ENCODE measurements at regions of chr3 and their contacts with region 1.

Region 1: GRCh38 chr3:48439820-48440589 is at the starts of genes CCDC51 and TMA7:
- DNase-seq: peak; percentile 99
- ATAC-seq: peak; percentile 96
- H3K4me3 Mint-ChIP-seq: peak within 1 kb of the TSS; percentile 97
- H3K27ac Mint-ChIP-seq: peak within 1 kb of the TSS; percentile 96
- H3K4me1 Mint-ChIP-seq: peaks cover 34% of the 10 kb centered on the region
- H3K27me3 Mint-ChIP-seq: no peaks in the 10 kb centered on the region
- total RNA-seq, gene CCDC51: 16.3 to 16.5 TPM
- total RNA-seq, gene TMA7: 339 to 364 TPM

Region 2: GRCh38 chr3:48240711-48241491 is 199.1 kb before region 1 on chr3 and contains the start of gene ZNF589:
- CTCF ChIA-PET with region 1: interaction called, 79 read pairs
- POLR2A ChIA-PET with region 1: interaction called, 7 read pairs
- DNase-seq: peak; percentile 98
- ATAC-seq: peak; percentile 99
- H3K4me3 Mint-ChIP-seq: peak within 1 kb of the TSS; percentile 92
- H3K27ac Mint-ChIP-seq: peak within 1 kb of the TSS; percentile 96
- H3K4me1 Mint-ChIP-seq: peaks cover 29% of the 10 kb centered on the region
- H3K27me3 Mint-ChIP-seq: no peaks in the 10 kb centered on the region
- total RNA-seq, gene ZNF589: 29.7 to 30.3 TPM

Region 3: GRCh38 chr3:48301020-48301796 is 138.8 kb before region 1 on chr3:
- CTCF ChIA-PET with region 1: interaction called, 34 read pairs
- POLR2A ChIA-PET with region 1: interaction called, 5 read pairs
- DNase-seq: peak; percentile 94
- ATAC-seq: peak; percentile 89
- H3K4me3 Mint-ChIP-seq: peak within 1 kb of the TSS; percentile 93
- H3K27ac Mint-ChIP-seq: peak within 1 kb of the TSS; percentile 97
- H3K4me1 Mint-ChIP-seq: peaks cover 40% of the 10 kb centered on the region
- H3K27me3 Mint-ChIP-seq: peaks cover 8% of the 10 kb centered on the region

Region 4: GRCh38 chr3:48410205-48411040 is 29.6 kb before region 1 on chr3:
- CTCF ChIA-PET with region 1: interaction called, 342 read pairs
- POLR2A ChIA-PET with region 1: interaction called, 3 read pairs
- DNase-seq: no peak
- ATAC-seq: no peak
- H3K4me3 Mint-ChIP-seq: no peak overlapping the region
- H3K27ac Mint-ChIP-seq: no peak overlapping the region
- H3K4me1 Mint-ChIP-seq: no peaks in the 10 kb centered on the region
- H3K27me3 Mint-ChIP-seq: no peaks in the 10 kb centered on the region

Region 5: DNA sequence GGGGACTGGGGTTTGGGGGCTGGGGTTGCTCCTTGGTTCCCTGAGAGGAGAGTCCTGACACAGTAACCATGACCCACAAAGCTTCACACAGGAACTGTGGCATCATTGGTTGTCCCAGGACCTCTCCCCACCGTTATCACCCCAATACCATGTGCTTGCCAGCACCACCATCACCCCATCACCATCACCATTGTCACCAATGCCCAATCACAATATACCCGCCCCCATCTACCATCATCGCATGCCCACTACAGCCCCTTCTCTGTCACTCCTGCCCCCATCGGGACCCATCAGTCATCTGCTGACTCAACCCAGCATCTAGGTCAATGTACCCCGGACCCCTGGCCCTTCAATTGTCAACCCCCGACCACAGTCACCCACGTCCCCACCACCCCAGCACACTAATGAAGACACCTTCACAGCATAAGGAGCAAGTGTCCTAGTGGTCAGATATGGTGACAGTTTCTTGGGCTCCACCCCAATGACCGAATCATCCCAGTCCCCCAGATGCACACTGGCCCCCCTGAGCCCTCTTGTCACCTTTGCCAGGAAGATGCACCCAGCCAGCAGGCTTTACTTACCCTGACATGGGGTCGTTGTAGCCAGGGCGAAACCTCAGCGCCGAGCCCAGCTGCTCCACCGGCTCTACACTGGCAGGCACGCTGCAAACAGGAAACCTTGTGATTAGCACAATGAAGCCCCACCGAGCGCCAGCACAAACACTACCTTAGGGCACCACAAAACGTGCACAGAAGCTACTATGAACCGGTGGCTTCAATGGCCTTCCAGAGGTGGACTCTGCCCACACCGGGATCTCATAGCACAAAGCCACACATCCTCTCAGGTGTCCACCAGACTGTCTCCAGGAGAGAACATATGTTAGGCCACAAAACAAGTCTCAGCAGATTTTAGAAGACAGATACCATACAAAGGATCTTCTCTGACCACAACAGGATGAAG is 38.9 kb after region 1 on chr3:
- CTCF ChIA-PET with region 1: interaction called, 57 read pairs
- POLR2A ChIA-PET with region 1: interaction called, 24 read pairs
- DNase-seq: peak; percentile 82
- ATAC-seq: peak; percentile 88
- H3K4me3 Mint-ChIP-seq: peak overlapping the region; percentile 83
- H3K27ac Mint-ChIP-seq: peak overlapping the region; percentile 100
- H3K4me1 Mint-ChIP-seq: peaks cover 56% of the 10 kb centered on the region
- H3K27me3 Mint-ChIP-seq: no peaks in the 10 kb centered on the region

Region 6: GRCh38 chr3:48556793-48557626 is 117.0 kb after region 1 on chr3 and contains the start of gene PFKFB4:
- CTCF ChIA-PET with region 1: interaction called, 63 read pairs
- POLR2A ChIA-PET with region 1: interaction called, 3 read pairs
- DNase-seq: peak; percentile 100
- ATAC-seq: peak; percentile 92
- H3K4me3 Mint-ChIP-seq: peak within 1 kb of the TSS; percentile 85
- H3K27ac Mint-ChIP-seq: peak within 1 kb of the TSS; percentile 83
- H3K4me1 Mint-ChIP-seq: peaks cover 66% of the 10 kb centered on the region
- H3K27me3 Mint-ChIP-seq: peaks cover 3% of the 10 kb centered on the region
- total RNA-seq, gene PFKFB4: 42.8 to 49.1 TPM

Region 7: GRCh38 chr3:48727511-48727910 is 287.5 kb after region 1 on chr3:
- CTCF ChIA-PET with region 1: no interaction called
- POLR2A ChIA-PET with region 1: no interaction called
- DNase-seq: no peak
- ATAC-seq: no peak
- H3K4me3 Mint-ChIP-seq: no peak overlapping the region
- H3K27ac Mint-ChIP-seq: no peak overlapping the region
- H3K4me1 Mint-ChIP-seq: no peaks in the 10 kb centered on the region
- H3K27me3 Mint-ChIP-seq: peaks cover 8% of the 10 kb centered on the region